Activated naive CD4-positive, alpha-beta T cell treated with anti-CD3 and anti-CD28 coated beads for 36 hours (primary cell): ENCODE measurements at regions of chr11 and their contacts with region 1.

Region 1: DNA sequence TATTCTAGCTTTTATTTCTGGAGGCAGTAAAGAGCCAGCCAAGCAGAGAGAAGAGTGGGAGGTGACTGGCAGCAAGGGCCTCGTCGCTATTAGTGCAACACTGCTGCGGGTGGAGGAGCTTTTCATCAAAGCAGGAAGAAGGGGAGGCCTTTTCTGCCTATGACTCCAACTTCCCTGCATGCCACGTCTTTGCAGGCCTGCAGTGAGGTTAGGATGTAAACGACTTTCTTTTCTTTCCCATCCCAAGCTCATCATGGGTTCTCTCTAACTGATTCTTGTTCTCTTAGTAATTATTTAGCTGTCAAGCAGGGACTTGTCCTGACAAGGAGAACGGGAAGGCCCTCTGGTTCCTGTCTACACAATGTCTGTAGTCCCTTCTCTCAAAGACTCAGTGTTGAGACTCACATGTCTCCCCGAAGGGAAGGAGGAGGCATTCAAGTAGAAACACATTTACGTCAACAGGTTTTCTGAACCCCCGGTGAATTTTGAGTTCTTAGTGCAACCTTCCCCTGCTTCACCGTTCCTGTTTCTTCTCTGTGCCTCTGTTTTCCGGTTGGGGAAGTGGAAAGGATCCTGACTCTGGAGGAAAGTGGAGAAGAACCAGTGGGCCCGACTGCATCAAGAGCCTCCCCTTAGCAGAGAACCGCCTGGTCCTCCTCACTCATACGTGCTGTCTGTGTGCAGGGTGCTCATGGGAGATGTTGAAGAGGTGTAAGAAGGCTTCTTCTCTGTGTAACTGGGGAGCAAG is 56.9 kb downstream of the PACS1 start:
- DNase-seq: peak; percentile 86
- H3K4me3 Mint-ChIP-seq: peak overlapping the region; percentile 77
- H3K27ac Mint-ChIP-seq: peak overlapping the region; percentile 98
- H3K4me1 Mint-ChIP-seq: peaks cover 70% of the 10 kb centered on the region
- H3K27me3 Mint-ChIP-seq: no peaks in the 10 kb centered on the region

Region 2: DNA sequence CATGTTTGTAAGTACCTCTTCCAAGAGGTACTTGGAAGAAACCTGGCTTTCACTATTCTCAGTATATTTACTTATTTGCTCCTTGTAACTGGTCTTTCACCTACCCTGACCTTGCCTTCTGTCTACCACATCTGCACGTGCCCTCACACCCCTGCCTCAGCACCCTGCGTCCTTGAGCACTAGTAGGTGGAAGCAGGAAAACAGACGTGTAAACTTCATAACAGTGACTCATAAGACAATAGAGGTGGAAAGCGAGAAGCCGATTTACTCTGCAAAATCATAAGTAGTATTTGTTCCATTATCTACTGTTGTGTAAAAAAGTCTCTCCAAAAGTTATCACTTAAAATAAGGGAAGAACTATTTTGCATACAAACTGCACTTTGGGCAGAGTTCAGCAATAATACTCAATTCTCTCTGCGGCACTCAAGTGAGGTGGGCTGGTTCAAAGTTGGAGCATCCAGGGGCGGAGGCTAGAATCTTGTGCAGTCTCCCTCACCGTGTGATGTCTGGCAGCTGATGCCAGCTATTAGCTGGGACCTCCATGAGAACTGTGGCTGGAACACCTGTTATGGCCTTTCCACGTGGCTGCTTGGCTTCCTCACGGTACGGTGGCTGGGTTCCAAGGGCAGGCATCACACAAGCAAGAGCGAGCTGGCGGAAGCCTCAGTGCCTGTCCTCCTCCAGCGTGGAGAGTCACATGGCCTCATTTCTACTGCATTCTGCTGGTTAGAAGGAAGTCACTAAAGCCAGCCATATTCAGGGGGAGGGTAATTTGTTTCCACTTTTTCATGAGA is 26.5 kb before region 1 on chr11:
- CTCF ChIA-PET with region 1: interaction called, 3 read pairs
- intact Hi-C with region 1: loop called (anchors 1 kb)
- DNase-seq: peak; percentile 80
- H3K4me3 Mint-ChIP-seq: peak overlapping the region; percentile 72
- H3K27ac Mint-ChIP-seq: peak overlapping the region; percentile 92
- H3K4me1 Mint-ChIP-seq: peaks cover 63% of the 10 kb centered on the region
- H3K27me3 Mint-ChIP-seq: no peaks in the 10 kb centered on the region

Region 3: GRCh38 chr11:66106786-66107599 is 20.0 kb before region 1 on chr11:
- CTCF ChIA-PET with region 1: interaction called, 4 read pairs
- intact Hi-C with region 1: loop called (anchors 1 kb)
- DNase-seq: peak; percentile 47
- H3K4me3 Mint-ChIP-seq: no peak overlapping the region
- H3K27ac Mint-ChIP-seq: peak overlapping the region; percentile 87
- H3K4me1 Mint-ChIP-seq: peaks cover 87% of the 10 kb centered on the region
- H3K27me3 Mint-ChIP-seq: no peaks in the 10 kb centered on the region

Region 4: DNA sequence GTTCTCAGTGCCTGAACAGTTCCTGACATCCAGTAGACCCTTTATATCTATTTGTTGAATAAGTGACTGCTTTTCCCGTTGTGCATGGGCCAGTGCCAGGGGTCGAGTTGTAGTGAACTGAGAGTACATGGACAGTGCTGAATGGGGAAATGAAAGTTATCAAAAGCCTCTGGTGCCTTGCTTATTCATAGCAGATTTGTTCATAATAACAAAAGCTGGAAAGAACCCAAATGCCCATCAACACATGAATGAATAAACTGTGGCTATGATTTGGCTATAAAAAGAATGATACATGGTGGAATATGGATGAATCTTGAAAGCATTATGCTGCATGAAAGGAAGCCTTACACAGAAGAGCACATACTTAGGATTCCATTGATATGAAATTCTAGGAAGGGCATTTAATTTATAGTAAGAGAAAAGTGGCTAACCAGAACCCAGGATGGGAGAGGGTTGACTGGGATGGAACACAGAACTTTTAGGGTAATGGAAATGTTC is 14.3 kb before region 1 on chr11:
- CTCF ChIA-PET with region 1: interaction called, 4 read pairs
- intact Hi-C with region 1: loop called (anchors 1 kb)
- DNase-seq: no peak
- H3K4me3 Mint-ChIP-seq: no peak overlapping the region
- H3K27ac Mint-ChIP-seq: peak overlapping the region; percentile 88
- H3K4me1 Mint-ChIP-seq: peaks cover 95% of the 10 kb centered on the region
- H3K27me3 Mint-ChIP-seq: no peaks in the 10 kb centered on the region